ENCODE measurements at regions of chr6 and their contacts with region 1.

Region 1: GRCh38 chr6:110389689-110390382 is 25.5 kb downstream of the DDO start:
- DNase-seq: no peak
- CTCF ChIP-seq: no peak

Region 2: GRCh38 chr6:110053395-110054240 is 336.2 kb before region 1 on chr6:
- in situ Hi-C with region 1: loop called (anchors 10 kb)
- DNase-seq: peak; percentile 53
- CTCF ChIP-seq: peak; percentile 46

Region 3: DNA sequence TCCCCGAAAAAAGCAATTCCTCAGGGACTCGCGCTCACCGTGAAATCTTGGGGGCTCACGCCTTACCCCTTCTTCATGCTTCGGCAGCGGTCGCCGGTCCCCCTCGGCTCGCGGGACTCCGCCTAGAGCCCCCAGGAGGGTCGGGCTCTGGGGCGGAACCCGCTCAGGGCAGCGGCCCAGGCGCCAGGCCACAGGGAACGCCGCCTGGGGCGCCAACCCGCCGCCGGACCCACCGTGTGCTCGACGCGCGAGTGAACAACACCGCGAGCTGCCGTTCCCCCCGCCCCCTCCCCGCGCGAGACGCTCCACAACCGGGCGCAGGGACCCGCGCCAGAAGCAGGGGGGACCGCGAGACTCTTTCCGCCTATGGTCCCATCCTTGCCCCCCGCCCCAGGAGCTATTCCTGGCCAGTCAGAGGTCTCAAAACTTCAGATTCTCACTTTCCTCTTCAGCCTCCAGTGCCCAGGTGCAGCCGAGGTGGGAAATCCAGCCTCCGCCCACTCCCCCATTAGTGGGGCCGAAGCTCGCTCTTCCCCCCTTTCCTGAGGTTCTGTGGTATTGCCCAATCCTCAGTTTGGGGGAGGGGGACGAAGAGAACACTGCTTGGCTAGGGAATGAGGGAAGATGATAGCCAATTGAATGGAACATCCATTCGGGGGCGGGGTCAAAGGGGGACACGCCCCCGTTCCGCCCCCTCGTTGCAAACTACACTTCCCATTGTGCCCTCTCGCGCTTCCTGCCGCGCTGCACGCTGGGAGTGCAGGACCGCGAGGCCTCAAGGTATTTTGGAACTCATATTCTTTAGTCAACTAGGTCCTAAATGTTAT is 210.2 kb before region 1 on chr6 and contains the start of gene WASF1:
- in situ Hi-C with region 1: loop called (anchors 10 kb)
- DNase-seq: peak; percentile 89
- CTCF ChIP-seq: no peak

Measured in GM13976 (cell line).